Heart left ventricle (tissue), 16 donors: ENCODE measurements at regions of chr10 and their contacts with region 1.

Region 1: DNA sequence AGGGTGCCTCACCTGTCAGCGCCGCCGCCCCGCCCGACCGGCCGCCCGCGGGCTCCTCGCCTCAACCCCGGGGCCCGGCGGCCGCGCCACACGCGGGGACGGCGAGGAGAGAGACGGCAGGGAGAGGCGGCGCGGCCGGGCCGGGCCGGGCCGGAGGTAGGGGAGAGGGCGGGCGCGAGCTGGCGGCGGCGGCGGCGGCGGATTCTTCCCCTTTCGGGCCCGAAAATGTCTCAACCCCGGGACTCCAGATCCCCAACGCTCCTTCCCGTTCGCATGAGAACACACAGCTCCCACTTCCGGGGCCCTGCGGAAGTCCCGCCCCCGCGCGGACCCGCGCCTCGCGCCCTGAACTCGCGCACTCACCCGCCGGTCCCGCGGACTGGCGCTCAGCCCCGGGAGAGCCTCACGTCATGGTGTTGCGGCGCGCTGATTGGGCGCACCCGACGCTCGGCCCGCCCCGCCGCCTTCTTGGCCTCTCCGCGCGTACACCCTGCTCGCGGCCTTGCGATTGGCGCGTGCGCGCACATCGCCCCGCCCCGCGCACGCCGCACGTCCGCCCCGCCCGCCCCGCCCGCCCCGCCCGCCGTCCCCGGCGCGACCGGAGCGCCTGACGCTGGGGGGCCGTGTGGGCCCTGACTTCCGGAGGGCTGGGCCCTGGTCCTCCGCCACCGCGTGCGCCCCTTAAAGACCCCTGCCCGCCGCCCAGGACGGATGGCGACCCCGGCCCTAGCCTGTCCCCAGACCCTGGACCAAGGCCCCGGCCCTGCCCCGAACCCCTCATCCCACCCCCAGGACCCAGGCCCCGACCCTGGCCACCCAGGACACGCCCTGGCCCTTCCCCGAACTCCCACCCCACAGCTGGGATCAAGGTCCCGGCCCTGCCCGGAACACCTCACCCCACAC is at the start of gene LARP4B:
- DNase-seq: peak; percentile 97 to 99 (median 98)
- ATAC-seq: peak; percentile 99 to 100 (median 99)
- H3K4me3 ChIP-seq: peak within 1 kb of the TSS; percentile 43 to 96 (median 77)
- H3K27ac ChIP-seq: peak within 1 kb of the TSS; percentile 91 to 99 (median 96)
- H3K4me1 ChIP-seq: peaks cover 4 to 47% (median 35%) of the 10 kb centered on the region in 12 donors
- H3K27me3 ChIP-seq: no peaks in the 10 kb centered on the region
- CTCF ChIP-seq: no peak
- POLR2A ChIP-seq: peak in 1 of 2 donors; percentile 73
- total RNA-seq, gene LARP4B: 26.8 to 81.1 (median 64.8) TPM

Region 2: DNA sequence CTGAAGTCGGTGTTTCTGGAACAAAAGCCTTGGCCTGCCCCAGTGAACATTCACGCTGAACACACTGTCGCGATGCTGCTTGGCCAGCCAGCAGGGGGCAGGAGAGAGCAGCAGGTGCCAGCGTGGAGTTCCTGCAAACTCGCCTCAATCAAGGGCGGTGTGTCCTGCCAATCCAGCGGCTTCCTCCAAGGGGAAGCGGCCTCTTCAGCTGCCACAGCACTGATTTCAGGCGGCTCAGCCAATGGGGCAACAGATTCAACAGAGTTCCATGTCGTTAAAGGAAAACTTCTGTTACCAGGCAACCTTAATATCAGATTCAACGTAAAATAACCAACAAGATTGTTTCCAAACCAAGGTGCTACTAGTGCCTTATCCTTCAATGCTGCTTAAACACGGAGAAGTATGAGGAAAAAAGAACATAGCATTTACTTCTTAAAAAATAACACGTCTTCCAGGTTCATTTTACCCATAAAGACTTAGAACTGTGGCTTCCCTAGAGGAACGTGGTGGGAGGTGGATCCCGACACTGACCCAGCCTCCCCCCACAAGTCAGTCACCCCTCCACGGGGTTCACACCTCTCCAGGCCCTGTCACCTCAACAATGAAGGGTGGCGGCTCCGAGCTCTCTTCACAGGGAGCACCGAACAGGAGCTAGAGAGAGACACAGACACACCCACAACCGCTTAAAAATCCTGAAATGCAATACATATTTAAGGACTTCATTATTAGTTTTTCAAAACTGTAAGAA is 420.4 kb before region 1 on chr10:
- intact Hi-C with region 1: loop called in 1 of 10 experiments (anchors 5 kb)
- DNase-seq: peak; percentile 91 to 96 (median 95)
- ATAC-seq: peak; percentile 91 to 94 (median 92)
- H3K4me3 ChIP-seq: peak overlapping the region in 2 of 12 donors; percentile 0 to 31
- H3K27ac ChIP-seq: peak overlapping the region in 9 of 12 donors; percentile 4 to 86 (median 54)
- H3K4me1 ChIP-seq: peaks cover 0 to 54% (median 24%) of the 10 kb centered on the region in 12 donors
- H3K27me3 ChIP-seq: no peaks in the 10 kb centered on the region
- CTCF ChIP-seq: peak in 11 of 12 donors; percentile 93 to 99 (median 97)
- POLR2A ChIP-seq: no peak

Region 3: DNA sequence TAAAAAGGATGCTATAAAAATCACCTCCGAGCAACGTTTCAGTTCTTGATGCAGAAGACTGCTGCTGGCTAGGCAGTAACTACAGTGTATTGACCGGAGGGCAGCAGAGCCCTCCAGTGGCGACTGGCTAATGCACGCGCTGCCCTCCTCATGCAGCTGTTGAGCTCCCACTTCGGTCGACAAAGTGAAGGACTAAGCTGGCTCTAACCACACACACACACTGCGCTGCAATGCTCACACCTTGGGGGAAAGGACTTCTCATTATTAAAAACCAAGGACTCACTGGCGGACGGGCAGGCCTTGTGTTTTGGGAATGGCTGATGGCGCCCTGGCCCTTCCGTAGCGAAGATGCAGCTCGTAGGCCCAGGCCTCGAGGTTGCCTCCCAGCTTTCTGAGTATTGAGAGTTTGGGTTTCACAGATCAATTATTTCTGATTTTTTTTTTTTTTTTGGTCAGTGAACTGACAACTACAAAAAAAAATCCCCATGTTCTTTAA is 121.3 kb before region 1 on chr10:
- intact Hi-C with region 1: loop called in 2 of 10 experiments (anchors 5 to 10 kb)
- DNase-seq: no peak
- ATAC-seq: peak; percentile 28 to 76 (median 58)
- H3K4me3 ChIP-seq: no peak overlapping the region
- H3K27ac ChIP-seq: peak overlapping the region in 9 of 12 donors; percentile 2 to 66 (median 32)
- H3K4me1 ChIP-seq: peaks cover 0 to 14% (median under 1%) of the 10 kb centered on the region in 12 donors
- H3K27me3 ChIP-seq: no peaks in the 10 kb centered on the region
- CTCF ChIP-seq: peak in 9 of 12 donors; percentile 8 to 51 (median 41)
- POLR2A ChIP-seq: no peak

Region 4: GRCh38 chr10:865257-865656 is 66.4 kb before region 1 on chr10:
- intact Hi-C with region 1: loop called in 3 of 10 experiments (anchors 5 kb)
- DNase-seq: no peak
- ATAC-seq: peak in 1 of 4 donors; percentile 5
- H3K4me3 ChIP-seq: no peak overlapping the region
- H3K27ac ChIP-seq: peak overlapping the region in 1 of 12 donors; percentile 33
- H3K4me1 ChIP-seq: peaks cover 0 to 46% (median 25%) of the 10 kb centered on the region in 12 donors
- H3K27me3 ChIP-seq: no peaks in the 10 kb centered on the region
- CTCF ChIP-seq: no peak
- POLR2A ChIP-seq: no peak

Region 5: GRCh38 chr10:987870-988666 is 56.4 kb after region 1 on chr10 and contains the start of gene GTPBP4:
- intact Hi-C with region 1: loop called in 8 of 10 experiments (anchors 2 to 10 kb)
- DNase-seq: peak; percentile 99 to 100 (median 99)
- ATAC-seq: peak; percentile 98 to 100 (median 98)
- H3K4me3 ChIP-seq: peak within 1 kb of the TSS; percentile 58 to 100 (median 90)
- H3K27ac ChIP-seq: peak within 1 kb of the TSS; percentile 86 to 98 (median 94)
- H3K4me1 ChIP-seq: peaks cover 2 to 32% (median 18%) of the 10 kb centered on the region in 12 donors
- H3K27me3 ChIP-seq: no peaks in the 10 kb centered on the region
- CTCF ChIP-seq: peak in 7 of 12 donors; percentile 7 to 56 (median 27)
- POLR2A ChIP-seq: peak; percentile 66 to 81
- total RNA-seq, gene GTPBP4: 13.5 to 31.8 (median 28.8) TPM

Region 6: GRCh38 chr10:1056326-1057105 is 124.8 kb after region 1 on chr10 and contains the start of gene WDR37:
- intact Hi-C with region 1: loop called in 2 of 10 experiments (anchors 5 kb)
- DNase-seq: peak; percentile 89 to 94 (median 92)
- ATAC-seq: peak; percentile 91 to 97 (median 96)
- H3K4me3 ChIP-seq: peak within 1 kb of the TSS; percentile 68 to 99 (median 92)
- H3K27ac ChIP-seq: peak within 1 kb of the TSS; percentile 96 to 100 (median 98)
- H3K4me1 ChIP-seq: peaks cover 0 to 68% (median 40%) of the 10 kb centered on the region in 12 donors
- H3K27me3 ChIP-seq: no peaks in the 10 kb centered on the region
- CTCF ChIP-seq: no peak
- POLR2A ChIP-seq: peak; percentile 46 to 70
- total RNA-seq, gene WDR37: 22.6 to 43.3 (median 30.7) TPM